ENCODE measurements at regions of chr5 and their contacts with region 1.

Region 1: DNA sequence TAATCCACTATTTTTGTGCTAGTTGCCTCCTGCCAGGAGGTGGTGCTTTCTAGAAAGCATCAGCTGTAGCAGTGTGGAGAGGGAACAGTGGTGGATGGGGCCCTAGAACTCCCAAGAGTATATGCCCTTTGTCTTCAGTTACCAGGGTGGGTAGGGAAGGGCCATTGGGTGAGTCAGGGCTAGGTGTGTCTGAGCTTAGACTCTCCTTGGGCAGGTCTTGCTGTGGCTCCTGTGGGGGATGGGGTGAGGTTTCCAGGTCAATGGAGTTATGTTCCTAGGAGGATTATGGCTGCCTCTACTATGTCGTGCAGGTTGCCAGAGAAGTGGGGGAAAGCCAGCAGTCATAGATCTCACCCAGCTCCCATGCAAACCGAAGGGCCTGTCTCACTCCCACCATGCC is 11.3 kb upstream of the ADAMTS12 start:
- DNase-seq: no peak
- H3K4me3 ChIP-seq: no peak overlapping the region
- H3K27ac ChIP-seq: no peak overlapping the region
- H3K4me1 ChIP-seq: no peaks in the 10 kb centered on the region
- H3K27me3 ChIP-seq: no peaks in the 10 kb centered on the region
- CTCF ChIP-seq: no peak
- POLR2A ChIP-seq: no peak

Region 2: GRCh38 chr5:33925278-33925677 is 22.2 kb after region 1 on chr5:
- intact Hi-C with region 1: loop called (anchors 1 kb)
- DNase-seq: no peak
- H3K4me3 ChIP-seq: no peak overlapping the region
- H3K27ac ChIP-seq: no peak overlapping the region
- H3K4me1 ChIP-seq: no peaks in the 10 kb centered on the region
- H3K27me3 ChIP-seq: no peaks in the 10 kb centered on the region
- CTCF ChIP-seq: no peak
- POLR2A ChIP-seq: no peak

Region 3: DNA sequence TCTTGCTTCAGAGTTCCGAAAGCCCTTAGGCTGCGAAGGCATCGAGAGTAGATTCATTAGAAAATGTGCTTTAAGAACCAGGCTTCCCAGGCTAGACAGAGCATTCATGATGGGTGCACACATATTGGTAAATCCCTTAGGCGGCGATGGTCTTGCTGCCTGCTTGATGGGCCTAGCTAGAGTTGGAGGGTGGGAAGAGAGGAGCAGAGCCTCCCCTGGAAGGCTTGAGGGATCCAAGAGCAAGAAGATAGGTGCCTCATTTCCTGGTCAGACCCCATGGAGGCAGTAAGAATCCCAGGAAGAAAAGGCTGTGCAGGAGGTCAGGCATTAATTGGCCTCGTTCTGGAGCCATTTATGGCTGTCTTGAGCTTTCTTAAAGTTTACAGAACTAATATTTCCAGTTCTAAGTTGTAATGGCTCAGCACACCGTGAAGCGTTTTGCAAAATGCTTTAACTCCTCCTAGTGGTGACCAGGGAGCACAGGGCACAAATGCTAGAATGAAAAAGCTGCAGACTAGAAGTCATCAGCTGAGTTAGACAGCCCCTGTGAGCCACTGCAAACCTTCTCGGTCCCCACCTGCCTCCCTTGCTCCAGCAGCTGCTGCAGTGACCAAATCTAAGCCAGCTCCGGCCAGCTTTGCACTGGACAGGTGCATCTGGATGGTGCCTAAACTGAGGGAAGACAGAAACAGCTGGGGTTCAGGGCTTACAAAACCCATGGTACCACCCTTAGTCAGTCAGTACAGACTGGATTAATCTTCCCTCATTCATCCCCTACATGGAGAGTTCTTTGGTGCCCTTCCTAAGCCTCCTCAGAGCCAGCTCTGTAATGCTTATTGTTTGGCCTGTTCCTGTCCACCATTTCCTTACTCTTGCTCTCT is 66.7 kb after region 1 on chr5:
- intact Hi-C with region 1: no loop called
- DNase-seq: no peak
- H3K4me3 ChIP-seq: no peak overlapping the region
- H3K27ac ChIP-seq: no peak overlapping the region
- H3K4me1 ChIP-seq: no peaks in the 10 kb centered on the region
- H3K27me3 ChIP-seq: no peaks in the 10 kb centered on the region
- CTCF ChIP-seq: peak in 2 of 3 experiments; percentile 15 to 45
- POLR2A ChIP-seq: no peak

Region 4: GRCh38 chr5:34452170-34452830 is 549.2 kb after region 1 on chr5:
- intact Hi-C with region 1: no loop called
- DNase-seq: no peak
- H3K4me3 ChIP-seq: no peak overlapping the region
- H3K27ac ChIP-seq: no peak overlapping the region
- H3K4me1 ChIP-seq: no peaks in the 10 kb centered on the region
- H3K27me3 ChIP-seq: no peaks in the 10 kb centered on the region
- CTCF ChIP-seq: no peak
- POLR2A ChIP-seq: no peak

Measured in vagina (tissue), 2 donors.